IMR-90 (cell line): ENCODE measurements at regions of chr22 and their contacts with region 1.

Region 1: DNA sequence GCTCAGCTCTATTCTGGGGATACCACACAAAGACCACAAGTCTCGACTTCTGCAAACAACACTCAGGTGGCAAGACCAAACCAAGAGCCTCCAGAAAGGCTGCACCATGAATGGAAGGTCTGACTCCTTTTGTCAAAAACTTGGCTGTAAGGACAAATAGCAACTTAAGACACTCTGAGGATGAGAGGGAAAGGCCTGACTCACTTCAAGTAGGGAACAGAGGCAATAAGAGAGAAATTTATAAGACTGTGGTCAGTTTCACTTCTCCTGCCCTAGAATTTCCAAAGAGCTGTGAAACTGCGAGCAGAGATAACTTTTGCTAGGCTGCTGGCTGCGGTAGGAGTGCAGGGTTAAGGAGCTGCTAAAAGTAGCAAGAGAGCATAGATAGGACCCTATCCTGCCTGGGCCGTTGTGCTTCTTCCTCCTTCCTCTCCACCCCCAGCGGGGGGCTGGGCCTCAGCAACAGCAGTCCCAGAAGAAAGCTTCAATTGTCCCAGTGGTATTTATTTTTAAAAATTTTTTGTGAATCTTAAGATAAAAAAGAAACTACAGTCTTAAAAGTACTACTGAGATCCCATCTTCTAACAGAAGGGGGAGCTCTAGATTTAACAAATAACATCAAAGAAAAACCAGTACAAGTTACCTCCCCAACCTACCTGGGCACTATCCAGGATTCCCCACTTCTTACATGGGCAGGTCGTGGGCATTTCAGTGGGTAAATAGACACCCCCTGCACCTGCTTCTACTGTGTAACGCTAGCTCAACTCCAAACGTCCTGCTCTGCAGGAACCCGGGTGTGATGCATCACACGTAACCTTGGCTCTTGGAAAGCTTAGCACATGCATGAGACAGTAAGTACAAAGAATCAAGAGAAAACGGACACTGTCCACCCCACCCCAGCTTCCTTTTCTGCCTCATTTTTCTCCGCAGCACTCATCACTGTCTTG is 66.4 kb downstream of the SGSM3 start:
- DNase-seq: peak; percentile 74
- ATAC-seq: peak; percentile 64
- H3K4me3 ChIP-seq: peak overlapping the region; percentile 16; the same call in 1 of the 2 replicates
- H3K27ac ChIP-seq: peak overlapping the region; percentile 76
- H3K4me1 ChIP-seq: peaks cover 24% of the 10 kb centered on the region
- H3K27me3 ChIP-seq: no peaks in the 10 kb centered on the region
- CTCF ChIP-seq: peak; percentile 62
- POLR2A ChIP-seq: no peak
- RAD21 ChIP-seq: peak; percentile 57

Region 2: GRCh38 chr22:40509401-40510134 is 72.8 kb after region 1 on chr22:
- CTCF ChIA-PET with region 1: interaction called, 4 read pairs
- POLR2A ChIA-PET with region 1: no interaction called
- dilution Hi-C with region 1: no loop called
- in situ Hi-C with region 1: no loop called
- intact Hi-C with region 1: loop called (anchors 5 kb)
- DNase-seq: peak; percentile 96
- ATAC-seq: peak; percentile 40
- H3K4me3 ChIP-seq: no peak overlapping the region
- H3K27ac ChIP-seq: peak overlapping the region; percentile 78
- H3K4me1 ChIP-seq: peaks cover 36% of the 10 kb centered on the region
- H3K27me3 ChIP-seq: no peaks in the 10 kb centered on the region
- CTCF ChIP-seq: no peak
- POLR2A ChIP-seq: peak; percentile 52; the same call in 1 of the 2 replicates
- RAD21 ChIP-seq: no peak

Region 3: GRCh38 chr22:40645579-40646197 is 208.9 kb after region 1 on chr22:
- CTCF ChIA-PET with region 1: interaction called, 27 read pairs
- POLR2A ChIA-PET with region 1: interaction called, 13 read pairs
- dilution Hi-C with region 1: no loop called
- in situ Hi-C with region 1: loop called (anchors 5 kb)
- intact Hi-C with region 1: loop called (anchors 1 kb)
- DNase-seq: no peak
- ATAC-seq: no peak
- H3K4me3 ChIP-seq: no peak overlapping the region
- H3K27ac ChIP-seq: no peak overlapping the region
- H3K4me1 ChIP-seq: peaks cover 2% of the 10 kb centered on the region; the same call in 1 of the 2 replicates
- H3K27me3 ChIP-seq: no peaks in the 10 kb centered on the region
- CTCF ChIP-seq: no peak
- POLR2A ChIP-seq: no peak
- RAD21 ChIP-seq: no peak

Region 4: DNA sequence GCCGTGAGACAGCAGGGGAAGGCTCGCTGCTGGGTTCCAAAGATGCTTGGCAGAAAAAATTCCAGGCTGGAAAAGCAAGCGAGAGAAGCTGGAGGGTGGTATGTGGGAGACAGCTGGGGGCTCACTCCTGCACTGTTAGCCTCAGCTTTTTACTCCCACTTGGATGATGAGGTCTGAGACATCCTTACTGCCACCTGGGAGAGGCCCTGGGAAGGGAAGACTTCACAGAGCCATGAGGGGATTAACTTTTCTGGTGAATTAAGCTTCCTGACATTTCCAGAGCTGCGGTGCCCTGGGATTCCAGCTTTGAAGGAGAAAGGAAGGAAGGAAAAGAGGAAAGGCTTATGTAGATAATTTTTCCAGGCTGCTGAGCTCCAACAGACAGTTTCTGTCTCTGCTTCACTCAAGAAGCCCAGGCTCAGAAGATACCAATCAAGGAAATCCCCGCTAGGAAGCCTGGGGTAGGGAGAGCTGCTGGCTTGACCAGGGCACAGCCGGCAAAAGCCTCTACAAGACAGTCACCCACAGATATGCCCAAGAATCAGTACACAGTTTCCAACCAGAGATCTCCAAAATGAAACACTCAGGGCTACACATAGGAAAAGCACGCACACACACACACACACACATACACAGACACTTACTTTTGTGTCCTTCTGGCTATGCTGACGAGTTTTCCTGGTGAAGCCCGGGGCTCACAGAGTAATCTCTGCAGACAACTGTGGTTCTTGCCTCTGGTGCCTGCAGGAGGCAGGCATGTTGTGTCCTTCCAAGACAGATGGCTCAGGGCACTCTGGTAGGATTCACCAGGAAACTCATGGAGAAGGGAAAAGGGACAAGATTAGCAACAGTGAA is 243.4 kb after region 1 on chr22:
- CTCF ChIA-PET with region 1: interaction called, 3 read pairs
- POLR2A ChIA-PET with region 1: no interaction called
- dilution Hi-C with region 1: no loop called
- in situ Hi-C with region 1: no loop called
- intact Hi-C with region 1: loop called (anchors 1 kb)
- DNase-seq: peak; percentile 31
- ATAC-seq: no peak
- H3K4me3 ChIP-seq: no peak overlapping the region
- H3K27ac ChIP-seq: no peak overlapping the region
- H3K4me1 ChIP-seq: peaks cover 16% of the 10 kb centered on the region
- H3K27me3 ChIP-seq: no peaks in the 10 kb centered on the region
- CTCF ChIP-seq: no peak
- POLR2A ChIP-seq: no peak
- RAD21 ChIP-seq: no peak